ENCODE measurements at regions of chr14 and their contacts with region 1.

Region 1: GRCh38 chr14:38089123-38089522 is 118.6 kb upstream of the SSTR1 start:
- DNase-seq: no peak
- ATAC-seq: peak in 2 of 3 donors; percentile 64 to 78
- H3K4me3 ChIP-seq: peak overlapping the region; percentile 38
- H3K4me3 Mint-ChIP-seq: peak overlapping the region; percentile 85
- H3K27ac ChIP-seq: peak overlapping the region; percentile 70
- H3K27ac Mint-ChIP-seq: peak overlapping the region; percentile 81
- H3K4me1 ChIP-seq: no peaks in the 10 kb centered on the region
- H3K4me1 Mint-ChIP-seq: peaks cover 11 to 17% of the 10 kb centered on the region in 2 donors
- H3K27me3 ChIP-seq: no peaks in the 10 kb centered on the region
- H3K27me3 Mint-ChIP-seq: no peaks in the 10 kb centered on the region
- CTCF ChIP-seq: no peak

Region 2: GRCh38 chr14:38073641-38074040 is 15.5 kb before region 1 on chr14:
- intact Hi-C with region 1: loop called (anchors 1 kb)
- DNase-seq: peak in 1 of 2 donors; percentile 61
- ATAC-seq: peak; percentile 4 to 30 (median 11)
- H3K4me3 ChIP-seq: no peak overlapping the region
- H3K4me3 Mint-ChIP-seq: peak overlapping the region; percentile 80
- H3K27ac ChIP-seq: peak overlapping the region; percentile 81
- H3K27ac Mint-ChIP-seq: peak overlapping the region; percentile 95 to 97
- H3K4me1 ChIP-seq: peaks cover 23% of the 10 kb centered on the region
- H3K4me1 Mint-ChIP-seq: peaks cover 58 to 79% of the 10 kb centered on the region in 2 donors
- H3K27me3 ChIP-seq: no peaks in the 10 kb centered on the region
- H3K27me3 Mint-ChIP-seq: no peaks in the 10 kb centered on the region
- CTCF ChIP-seq: no peak

Region 3: GRCh38 chr14:38309522-38310277 is 220.6 kb after region 1 on chr14:
- intact Hi-C with region 1: no loop called
- DNase-seq: no peak
- ATAC-seq: no peak
- H3K4me3 ChIP-seq: no peak overlapping the region
- H3K4me3 Mint-ChIP-seq: no peak overlapping the region
- H3K27ac ChIP-seq: no peak overlapping the region
- H3K27ac Mint-ChIP-seq: no peak overlapping the region
- H3K4me1 ChIP-seq: no peaks in the 10 kb centered on the region
- H3K4me1 Mint-ChIP-seq: no peaks in the 10 kb centered on the region
- H3K27me3 ChIP-seq: no peaks in the 10 kb centered on the region
- H3K27me3 Mint-ChIP-seq: no peaks in the 10 kb centered on the region
- CTCF ChIP-seq: no peak